ENCODE measurements at regions of chr6 and their contacts with region 1.

Region 1: DNA sequence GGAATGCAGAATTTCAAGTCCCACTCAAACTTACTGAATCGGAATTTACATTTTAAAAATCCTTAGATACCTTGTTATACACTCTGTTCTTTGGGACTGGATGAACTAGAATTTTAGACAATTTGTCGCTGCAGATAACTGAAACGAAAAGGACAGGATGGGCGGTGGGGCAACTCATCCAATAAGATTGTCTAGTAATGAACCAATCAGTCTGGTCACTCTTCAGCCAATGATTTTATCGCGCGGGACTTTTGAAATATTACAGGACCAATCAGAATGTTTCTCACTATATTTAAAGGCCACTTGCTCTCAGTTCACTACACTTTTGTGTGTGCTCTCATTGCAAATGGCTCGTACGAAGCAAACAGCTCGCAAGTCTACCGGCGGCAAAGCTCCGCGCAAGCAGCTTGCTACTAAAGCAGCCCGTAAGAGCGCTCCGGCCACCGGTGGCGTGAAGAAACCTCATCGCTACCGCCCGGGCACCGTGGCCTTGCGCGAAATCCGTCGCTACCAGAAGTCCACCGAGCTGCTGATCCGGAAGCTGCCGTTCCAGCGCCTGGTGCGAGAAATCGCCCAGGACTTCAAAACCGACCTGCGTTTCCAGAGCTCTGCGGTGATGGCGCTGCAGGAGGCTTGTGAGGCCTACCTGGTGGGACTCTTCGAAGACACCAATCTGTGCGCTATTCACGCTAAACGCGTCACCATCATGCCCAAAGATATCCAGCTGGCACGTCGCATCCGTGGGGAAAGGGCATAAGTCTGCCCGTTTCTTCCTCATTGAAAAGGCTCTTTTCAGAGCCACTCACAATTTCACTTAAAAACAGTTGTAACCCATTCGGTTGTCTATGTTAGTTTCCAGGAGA is 41.9 kb upstream of the HFE start:
- DNase-seq: peak; percentile 95
- H3K4me3 Mint-ChIP-seq: peak overlapping the region; percentile 80
- H3K27ac Mint-ChIP-seq: peak overlapping the region; percentile 86
- H3K4me1 Mint-ChIP-seq: peaks cover 16% of the 10 kb centered on the region
- H3K27me3 Mint-ChIP-seq: no peaks in the 10 kb centered on the region
- CTCF ChIP-seq: no peak

Region 2: DNA sequence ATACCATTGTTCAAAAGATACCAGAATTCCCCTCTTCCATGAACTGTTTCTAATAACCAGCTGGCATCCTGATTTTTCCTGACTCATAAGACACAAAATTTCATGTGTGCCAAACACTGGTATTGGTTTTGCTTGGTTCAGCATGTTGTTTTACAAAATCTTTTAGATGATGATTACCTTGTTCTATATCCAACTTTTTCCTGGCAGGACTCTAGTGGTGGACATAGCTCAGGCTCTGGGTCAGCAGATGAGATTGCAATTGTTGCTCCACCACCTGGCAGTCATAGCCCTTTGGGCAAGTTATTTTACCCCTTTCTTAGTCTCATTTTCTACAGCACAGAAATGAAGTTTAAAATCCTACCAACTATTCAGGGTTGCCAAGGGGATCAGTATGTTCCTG is 76.5 kb before region 1 on chr6:
- CTCF ChIA-PET with region 1: no interaction called
- POLR2A ChIA-PET with region 1: no interaction called
- intact Hi-C with region 1: no loop called
- DNase-seq: peak; percentile 24
- H3K4me3 Mint-ChIP-seq: no peak overlapping the region
- H3K27ac Mint-ChIP-seq: peak overlapping the region; percentile 46
- H3K4me1 Mint-ChIP-seq: peaks cover 45% of the 10 kb centered on the region
- H3K27me3 Mint-ChIP-seq: no peaks in the 10 kb centered on the region
- CTCF ChIP-seq: no peak

Region 3: DNA sequence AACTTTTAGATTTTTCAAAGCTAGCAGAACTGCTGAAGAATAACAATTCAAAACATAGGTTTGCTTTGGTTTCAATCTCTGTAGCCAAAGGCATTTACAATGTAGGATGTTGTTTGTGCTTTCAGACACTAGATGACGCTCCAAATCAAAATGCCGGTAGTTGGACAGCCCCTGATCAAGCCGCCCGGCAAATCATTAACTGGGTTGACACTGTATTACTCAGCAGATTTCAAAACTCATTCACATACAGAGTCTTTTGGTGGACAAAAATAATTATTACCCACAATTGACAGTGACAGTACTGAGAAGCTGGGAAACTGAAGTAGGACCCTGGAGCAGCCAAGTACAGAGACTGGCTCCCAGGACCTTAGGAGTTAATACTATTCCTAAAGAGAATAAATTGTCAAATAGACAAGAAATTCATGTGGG is 20.7 kb after region 1 on chr6:
- CTCF ChIA-PET with region 1: interaction called, 6 read pairs
- POLR2A ChIA-PET with region 1: interaction called, 26 read pairs
- intact Hi-C with region 1: no loop called
- DNase-seq: peak; percentile 87
- H3K4me3 Mint-ChIP-seq: no peak overlapping the region
- H3K27ac Mint-ChIP-seq: peak overlapping the region; percentile 23
- H3K4me1 Mint-ChIP-seq: no peaks in the 10 kb centered on the region
- H3K27me3 Mint-ChIP-seq: no peaks in the 10 kb centered on the region
- CTCF ChIP-seq: peak; percentile 81

Region 4: GRCh38 chr6:26175428-26176181 is 130.3 kb after region 1 on chr6:
- CTCF ChIA-PET with region 1: no interaction called
- POLR2A ChIA-PET with region 1: interaction called, 10 read pairs
- intact Hi-C with region 1: no loop called
- DNase-seq: peak; percentile 82
- H3K4me3 Mint-ChIP-seq: peak overlapping the region; percentile 23
- H3K27ac Mint-ChIP-seq: peak overlapping the region; percentile 70
- H3K4me1 Mint-ChIP-seq: peaks cover 28% of the 10 kb centered on the region
- H3K27me3 Mint-ChIP-seq: no peaks in the 10 kb centered on the region
- CTCF ChIP-seq: peak; percentile 70

Region 5: GRCh38 chr6:27838058-27838944 is 1793.0 kb after region 1 on chr6:
- CTCF ChIA-PET with region 1: no interaction called
- POLR2A ChIA-PET with region 1: interaction called, 35 read pairs
- intact Hi-C with region 1: no loop called
- DNase-seq: peak; percentile 98
- H3K4me3 Mint-ChIP-seq: no peak overlapping the region
- H3K27ac Mint-ChIP-seq: no peak overlapping the region
- H3K4me1 Mint-ChIP-seq: peaks cover 32% of the 10 kb centered on the region
- H3K27me3 Mint-ChIP-seq: no peaks in the 10 kb centered on the region
- CTCF ChIP-seq: no peak